IMR-90 (cell line): ENCODE measurements at regions of chr21 and their contacts with region 1.

Region 1: GRCh38 chr21:31700040-31700439 is 31.9 kb downstream of the SCAF4 start:
- DNase-seq: no peak
- ATAC-seq: no peak
- H3K4me3 ChIP-seq: no peak overlapping the region
- H3K27ac ChIP-seq: no peak overlapping the region
- H3K4me1 ChIP-seq: no peaks in the 10 kb centered on the region
- H3K27me3 ChIP-seq: no peaks in the 10 kb centered on the region
- CTCF ChIP-seq: no peak
- POLR2A ChIP-seq: no peak
- RAD21 ChIP-seq: no peak

Region 2: DNA sequence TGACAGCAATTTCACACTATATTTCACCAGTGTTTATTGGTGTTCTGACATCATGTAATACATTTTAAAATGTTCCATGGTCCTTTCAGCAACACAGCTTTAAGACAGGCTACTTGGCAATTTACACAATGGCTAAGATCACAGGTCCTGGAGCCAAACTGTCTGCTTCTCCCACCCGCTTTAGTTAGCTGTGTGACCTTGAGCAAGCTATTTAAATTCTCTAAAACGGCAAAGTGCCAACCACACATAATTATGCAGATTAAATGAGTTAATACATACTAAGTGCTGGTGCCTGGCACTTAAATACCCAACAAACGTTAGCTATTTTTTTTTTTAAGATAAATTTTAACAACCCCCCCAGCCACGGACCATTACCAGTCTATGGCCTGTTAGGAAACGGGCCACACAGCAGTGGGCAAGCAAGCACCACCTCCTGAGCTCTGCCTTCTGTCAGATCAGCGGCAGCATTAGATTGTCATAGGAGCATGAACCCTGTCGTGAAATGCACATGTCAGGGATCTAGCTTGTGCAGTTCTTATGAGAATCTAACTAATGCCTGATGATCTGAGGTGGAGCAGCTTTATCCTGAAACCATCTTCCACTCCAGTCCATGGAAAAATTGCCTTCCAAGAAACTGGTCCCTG is 13.6 kb before region 1 on chr21:
- CTCF ChIA-PET with region 1: interaction called, 5 read pairs
- POLR2A ChIA-PET with region 1: no interaction called
- dilution Hi-C with region 1: no loop called
- in situ Hi-C with region 1: no loop called
- intact Hi-C with region 1: loop called (anchors 2 kb)
- DNase-seq: no peak
- ATAC-seq: no peak
- H3K4me3 ChIP-seq: no peak overlapping the region
- H3K27ac ChIP-seq: no peak overlapping the region; the same call in 1 of the 2 replicates
- H3K4me1 ChIP-seq: peaks cover 4% of the 10 kb centered on the region
- H3K27me3 ChIP-seq: no peaks in the 10 kb centered on the region
- CTCF ChIP-seq: no peak
- POLR2A ChIP-seq: no peak
- RAD21 ChIP-seq: no peak